ENCODE measurements at regions of chrX and their contacts with region 1.

Region 1: DNA sequence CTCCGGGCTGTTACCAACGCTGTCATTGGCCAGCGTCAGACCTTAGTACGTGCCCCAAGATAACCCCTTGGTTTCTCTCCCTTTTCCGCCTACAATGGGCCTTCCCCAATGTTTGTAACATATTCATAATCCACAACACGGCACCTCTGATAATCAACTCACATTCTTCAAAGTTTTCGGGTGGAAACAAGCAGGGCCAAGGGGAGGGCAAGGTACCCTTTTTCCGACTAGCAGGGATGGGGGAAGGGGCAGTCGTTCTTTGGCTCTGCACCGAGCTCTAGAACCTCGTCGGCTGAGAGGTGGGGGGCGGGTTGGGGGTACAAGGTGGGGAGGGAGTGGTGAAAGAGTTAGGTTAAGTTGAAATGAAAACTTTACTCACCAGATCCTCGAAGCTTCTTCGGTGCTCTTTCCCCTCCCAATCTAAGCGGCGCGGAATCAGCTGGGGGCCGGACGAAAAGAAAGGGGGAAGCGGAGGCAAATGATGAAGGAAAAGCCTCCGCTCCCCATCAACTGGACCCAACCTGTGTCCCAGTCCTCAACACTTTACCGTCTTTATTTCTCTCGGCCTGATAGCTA is 1.4 kb downstream of the BRWD3 start:
- DNase-seq: peak; percentile 52 to 90 (median 72)
- ATAC-seq: peak; percentile 60
- H3K4me3 ChIP-seq: peak overlapping the region; percentile 87 to 96
- H3K4me3 Mint-ChIP-seq: peak overlapping the region; percentile 97
- H3K27ac ChIP-seq: peak overlapping the region; percentile 78 to 89
- H3K27ac Mint-ChIP-seq: peak overlapping the region; percentile 98
- H3K4me1 ChIP-seq: peaks cover 28% of the 10 kb centered on the region
- H3K4me1 Mint-ChIP-seq: peaks cover 45% of the 10 kb centered on the region
- H3K27me3 ChIP-seq: no peaks in the 10 kb centered on the region
- H3K27me3 Mint-ChIP-seq: no peaks in the 10 kb centered on the region
- CTCF ChIP-seq: no peak

Region 2: GRCh38 chrX:80846247-80846646 is 38.0 kb after region 1 on chrX:
- CTCF ChIA-PET with region 1: no interaction called
- POLR2A ChIA-PET with region 1: no interaction called
- intact Hi-C with region 1: loop called in 1 of 2 experiments (anchors 5 kb)
- DNase-seq: no peak
- ATAC-seq: no peak
- H3K4me3 ChIP-seq: no peak overlapping the region
- H3K4me3 Mint-ChIP-seq: no peak overlapping the region
- H3K27ac ChIP-seq: no peak overlapping the region
- H3K27ac Mint-ChIP-seq: no peak overlapping the region
- H3K4me1 ChIP-seq: no peaks in the 10 kb centered on the region
- H3K4me1 Mint-ChIP-seq: no peaks in the 10 kb centered on the region
- H3K27me3 ChIP-seq: no peaks in the 10 kb centered on the region
- H3K27me3 Mint-ChIP-seq: no peaks in the 10 kb centered on the region
- CTCF ChIP-seq: no peak

Region 3: DNA sequence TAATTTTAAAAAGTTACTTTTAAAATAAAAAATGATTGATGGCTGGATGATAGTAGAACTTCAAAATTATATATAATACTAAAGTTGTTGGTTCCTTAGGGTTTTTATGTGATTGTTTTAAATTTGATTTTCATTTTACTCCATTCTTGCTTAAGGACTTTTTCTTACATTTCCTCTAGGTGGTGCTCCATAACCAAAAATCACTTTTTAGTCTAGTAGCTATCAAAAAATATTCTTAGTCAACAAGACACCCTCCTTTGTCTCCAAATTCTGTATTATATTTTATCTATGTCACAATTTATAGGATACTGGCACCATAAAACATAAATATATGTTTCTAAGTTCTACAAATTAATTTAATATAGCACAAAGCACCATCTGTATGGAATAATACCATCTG is 68.6 kb after region 1 on chrX:
- CTCF ChIA-PET with region 1: no interaction called
- POLR2A ChIA-PET with region 1: no interaction called
- intact Hi-C with region 1: loop called in 1 of 2 experiments (anchors 1 kb)
- DNase-seq: peak in 2 of 9 experiments; percentile 31 to 49
- ATAC-seq: no peak
- H3K4me3 ChIP-seq: no peak overlapping the region
- H3K4me3 Mint-ChIP-seq: no peak overlapping the region
- H3K27ac ChIP-seq: no peak overlapping the region
- H3K27ac Mint-ChIP-seq: no peak overlapping the region
- H3K4me1 ChIP-seq: no peaks in the 10 kb centered on the region
- H3K4me1 Mint-ChIP-seq: no peaks in the 10 kb centered on the region
- H3K27me3 ChIP-seq: no peaks in the 10 kb centered on the region
- H3K27me3 Mint-ChIP-seq: no peaks in the 10 kb centered on the region
- CTCF ChIP-seq: peak; percentile 38

Region 4: GRCh38 chrX:81121513-81122382 is 313.5 kb after region 1 on chrX:
- CTCF ChIA-PET with region 1: interaction called, 7 read pairs
- POLR2A ChIA-PET with region 1: interaction called, 9 read pairs
- intact Hi-C with region 1: loop called (anchors 1 to 5 kb)
- DNase-seq: peak; percentile 71 to 91 (median 84)
- ATAC-seq: peak; percentile 94
- H3K4me3 ChIP-seq: peak overlapping the region; percentile 71 to 82
- H3K4me3 Mint-ChIP-seq: peak overlapping the region; percentile 93
- H3K27ac ChIP-seq: peak overlapping the region in 1 of 2 experiments; percentile 39
- H3K27ac Mint-ChIP-seq: peak overlapping the region; percentile 46
- H3K4me1 ChIP-seq: peaks cover 4% of the 10 kb centered on the region
- H3K4me1 Mint-ChIP-seq: peaks cover 9% of the 10 kb centered on the region
- H3K27me3 ChIP-seq: no peaks in the 10 kb centered on the region
- H3K27me3 Mint-ChIP-seq: no peaks in the 10 kb centered on the region
- CTCF ChIP-seq: no peak

Region 5: DNA sequence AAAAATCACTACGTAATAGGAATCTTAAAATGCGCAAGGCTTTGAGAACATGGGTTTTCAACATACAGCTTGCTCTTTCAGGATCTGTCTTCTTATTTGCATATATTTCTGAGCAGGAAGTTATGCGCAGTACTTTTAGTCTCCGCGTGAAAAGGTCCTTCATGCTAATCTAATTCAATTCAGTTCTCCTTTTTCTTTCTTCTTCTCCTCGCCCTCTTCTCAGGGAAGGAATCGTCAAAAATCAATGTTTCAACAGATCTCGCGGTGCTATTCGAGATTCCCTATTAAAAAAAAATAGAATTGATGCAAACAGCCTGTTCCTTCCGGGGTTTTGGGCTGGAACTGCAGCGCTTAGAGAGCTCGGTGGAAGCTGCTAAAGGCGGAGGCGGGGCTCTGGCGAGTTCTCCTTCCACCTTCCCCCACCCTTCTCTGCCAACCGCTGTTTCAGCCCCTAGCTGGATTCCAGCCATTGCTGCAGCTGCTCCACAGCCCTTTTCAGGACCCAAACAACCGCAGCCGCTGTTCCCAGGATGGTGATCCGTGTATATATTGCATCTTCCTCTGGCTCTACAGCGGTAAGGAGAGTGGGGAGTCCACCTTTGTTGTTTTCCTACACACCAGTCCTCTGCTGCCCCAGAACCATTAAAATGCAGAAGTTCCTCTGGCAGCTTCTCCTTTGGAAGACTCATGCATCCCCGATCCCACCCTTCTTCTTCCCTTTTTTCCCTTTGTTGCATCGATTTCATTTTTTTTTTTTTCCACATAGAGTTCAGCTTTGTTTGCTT is 393.6 kb after region 1 on chrX and contains the starts of genes HMGN5 and SH3BGRL:
- CTCF ChIA-PET with region 1: no interaction called
- POLR2A ChIA-PET with region 1: interaction called, 6 read pairs
- intact Hi-C with region 1: loop called (anchors 1 to 2 kb)
- DNase-seq: peak; percentile 33 to 87 (median 70)
- ATAC-seq: peak; percentile 95
- H3K4me3 ChIP-seq: peak within 1 kb of the TSS; percentile 83 to 90
- H3K4me3 Mint-ChIP-seq: peak within 1 kb of the TSS; percentile 97
- H3K27ac ChIP-seq: peak within 1 kb of the TSS; percentile 84 to 89
- H3K27ac Mint-ChIP-seq: peak within 1 kb of the TSS; percentile 94
- H3K4me1 ChIP-seq: peaks cover 6% of the 10 kb centered on the region
- H3K4me1 Mint-ChIP-seq: peaks cover 48% of the 10 kb centered on the region
- H3K27me3 ChIP-seq: no peaks in the 10 kb centered on the region
- H3K27me3 Mint-ChIP-seq: no peaks in the 10 kb centered on the region
- CTCF ChIP-seq: no peak
- total RNA-seq, gene HMGN5: 0.27 to 0.92 TPM
- total RNA-seq, gene SH3BGRL: 37.3 to 39.5 TPM

Region 6: DNA sequence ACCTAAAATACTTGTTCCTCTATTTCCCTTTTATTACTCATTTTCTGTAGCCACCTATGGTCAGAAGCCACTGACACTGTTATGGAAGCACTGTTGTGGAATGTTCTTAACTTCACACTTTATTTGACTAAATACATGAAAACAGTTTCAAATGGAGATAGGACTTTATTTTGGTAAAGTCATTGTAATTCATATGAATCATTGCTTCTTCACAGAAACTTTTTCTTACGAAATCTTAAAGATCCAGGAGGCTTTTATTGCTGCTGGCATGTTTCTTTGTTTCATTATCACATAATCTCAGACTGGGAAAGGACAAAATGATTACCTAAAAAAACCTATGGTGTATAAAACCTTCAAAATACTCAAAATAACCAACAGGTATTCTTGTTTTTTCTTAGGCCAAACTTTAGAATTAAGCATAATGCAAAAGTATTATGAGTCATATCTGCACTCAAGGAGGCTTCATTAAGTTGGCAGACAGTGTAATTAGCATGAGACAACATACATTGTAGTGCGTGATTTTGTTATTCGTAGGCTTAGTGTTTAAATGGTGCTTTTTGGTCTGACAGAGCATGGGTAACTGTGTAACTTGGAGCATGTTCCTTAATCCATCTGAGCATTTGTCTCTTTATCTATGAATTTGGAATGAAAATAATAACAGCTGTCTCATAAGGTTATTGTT is 451.6 kb after region 1 on chrX:
- CTCF ChIA-PET with region 1: no interaction called
- POLR2A ChIA-PET with region 1: no interaction called
- intact Hi-C with region 1: no loop called
- DNase-seq: no peak
- ATAC-seq: no peak
- H3K4me3 ChIP-seq: no peak overlapping the region
- H3K4me3 Mint-ChIP-seq: no peak overlapping the region
- H3K27ac ChIP-seq: no peak overlapping the region
- H3K27ac Mint-ChIP-seq: peak overlapping the region; percentile 22
- H3K4me1 ChIP-seq: peaks cover 7% of the 10 kb centered on the region
- H3K4me1 Mint-ChIP-seq: peaks cover 59% of the 10 kb centered on the region
- H3K27me3 ChIP-seq: no peaks in the 10 kb centered on the region
- H3K27me3 Mint-ChIP-seq: no peaks in the 10 kb centered on the region
- CTCF ChIP-seq: no peak

Measured in CD8-positive, alpha-beta T cell (primary cell).